Activated CD8-positive, alpha-beta T cell treated with anti-CD3 and anti-CD28 coated beads, Interleukin-2, amount 10 ng/mL, durations not matched to agents 7 days and 5 days (primary cell): ENCODE measurements at regions of chr6 and their contacts with region 1.

Region 1: GRCh38 chr6:52361945-52362442 is at the start of gene PAQR8:
- DNase-seq: peak; percentile 82
- ATAC-seq: peak; percentile 93
- H3K4me3 Mint-ChIP-seq: peak within 1 kb of the TSS; percentile 98
- H3K27ac Mint-ChIP-seq: peak within 1 kb of the TSS; percentile 92
- H3K4me1 Mint-ChIP-seq: peaks cover 34% of the 10 kb centered on the region
- H3K27me3 Mint-ChIP-seq: no peaks in the 10 kb centered on the region
- total RNA-seq, gene PAQR8: 23.0 to 25.7 TPM

Region 2: GRCh38 chr6:52304983-52305390 is 57.0 kb before region 1 on chr6:
- CTCF ChIA-PET with region 1: interaction called, 28 read pairs
- POLR2A ChIA-PET with region 1: interaction called, 4 read pairs
- DNase-seq: no peak
- ATAC-seq: peak; percentile 37
- H3K4me3 Mint-ChIP-seq: peak overlapping the region; percentile 59
- H3K27ac Mint-ChIP-seq: peak overlapping the region; percentile 83
- H3K4me1 Mint-ChIP-seq: peaks cover 62% of the 10 kb centered on the region
- H3K27me3 Mint-ChIP-seq: no peaks in the 10 kb centered on the region

Region 3: DNA sequence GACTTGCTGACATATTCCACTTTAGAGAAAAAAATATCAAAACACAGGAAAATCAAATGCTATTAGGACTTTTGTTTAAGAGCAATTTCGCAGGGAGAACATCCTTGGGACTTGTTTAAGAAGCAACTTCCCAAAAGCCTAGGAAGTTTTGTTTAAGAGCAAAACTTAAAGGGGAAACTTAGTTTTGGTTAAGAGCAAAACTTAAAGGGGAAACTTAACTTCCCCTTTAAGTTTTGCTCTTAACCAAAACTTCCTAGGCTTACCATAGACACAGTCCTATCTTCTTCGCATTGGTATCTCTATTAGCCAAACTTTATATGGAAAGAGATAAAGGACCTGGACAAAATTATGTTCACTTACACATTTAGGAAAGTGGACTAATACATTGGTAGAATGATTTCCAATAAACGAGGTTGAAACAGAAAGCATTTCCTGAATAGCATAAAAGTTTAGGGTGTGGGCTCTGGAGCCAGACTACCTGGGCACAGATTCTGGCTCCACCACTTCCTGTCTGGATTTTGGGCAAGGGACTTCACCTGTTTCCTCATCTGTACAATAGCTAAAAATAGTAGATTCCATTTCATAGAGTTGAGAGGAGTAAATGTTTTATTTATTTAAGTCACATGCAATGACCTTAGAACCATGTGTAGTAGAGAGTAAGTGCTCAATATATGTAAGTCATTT is 15.7 kb after region 1 on chr6:
- CTCF ChIA-PET with region 1: interaction called, 19 read pairs
- POLR2A ChIA-PET with region 1: interaction called, 5 read pairs
- DNase-seq: no peak
- ATAC-seq: peak; percentile 39
- H3K4me3 Mint-ChIP-seq: peak overlapping the region; percentile 30
- H3K27ac Mint-ChIP-seq: peak overlapping the region; percentile 63
- H3K4me1 Mint-ChIP-seq: peaks cover 53% of the 10 kb centered on the region
- H3K27me3 Mint-ChIP-seq: no peaks in the 10 kb centered on the region

Region 4: GRCh38 chr6:52546678-52547077 is 184.7 kb after region 1 on chr6:
- CTCF ChIA-PET with region 1: no interaction called
- POLR2A ChIA-PET with region 1: no interaction called
- DNase-seq: no peak
- ATAC-seq: no peak
- H3K4me3 Mint-ChIP-seq: no peak overlapping the region
- H3K27ac Mint-ChIP-seq: no peak overlapping the region
- H3K4me1 Mint-ChIP-seq: peaks cover 3% of the 10 kb centered on the region
- H3K27me3 Mint-ChIP-seq: peaks cover 2% of the 10 kb centered on the region